Transverse colon (tissue), 4 donors: ENCODE measurements at regions of chr4 and their contacts with region 1.

Region 1: GRCh38 chr4:112284662-112285411 is 867 bp downstream of the TIFA start:
- DNase-seq: peak; percentile 27
- H3K4me3 ChIP-seq: peak overlapping the region; percentile 57 to 97 (median 84)
- H3K27ac ChIP-seq: peak overlapping the region; percentile 84 to 88 (median 86)
- H3K4me1 ChIP-seq: peaks cover 8 to 20% (median 14%) of the 10 kb centered on the region in 4 donors
- H3K27me3 ChIP-seq: no peaks in the 10 kb centered on the region
- CTCF ChIP-seq: no peak
- EP300 ChIP-seq: no peak
- POLR2A ChIP-seq: no peak

Region 2: DNA sequence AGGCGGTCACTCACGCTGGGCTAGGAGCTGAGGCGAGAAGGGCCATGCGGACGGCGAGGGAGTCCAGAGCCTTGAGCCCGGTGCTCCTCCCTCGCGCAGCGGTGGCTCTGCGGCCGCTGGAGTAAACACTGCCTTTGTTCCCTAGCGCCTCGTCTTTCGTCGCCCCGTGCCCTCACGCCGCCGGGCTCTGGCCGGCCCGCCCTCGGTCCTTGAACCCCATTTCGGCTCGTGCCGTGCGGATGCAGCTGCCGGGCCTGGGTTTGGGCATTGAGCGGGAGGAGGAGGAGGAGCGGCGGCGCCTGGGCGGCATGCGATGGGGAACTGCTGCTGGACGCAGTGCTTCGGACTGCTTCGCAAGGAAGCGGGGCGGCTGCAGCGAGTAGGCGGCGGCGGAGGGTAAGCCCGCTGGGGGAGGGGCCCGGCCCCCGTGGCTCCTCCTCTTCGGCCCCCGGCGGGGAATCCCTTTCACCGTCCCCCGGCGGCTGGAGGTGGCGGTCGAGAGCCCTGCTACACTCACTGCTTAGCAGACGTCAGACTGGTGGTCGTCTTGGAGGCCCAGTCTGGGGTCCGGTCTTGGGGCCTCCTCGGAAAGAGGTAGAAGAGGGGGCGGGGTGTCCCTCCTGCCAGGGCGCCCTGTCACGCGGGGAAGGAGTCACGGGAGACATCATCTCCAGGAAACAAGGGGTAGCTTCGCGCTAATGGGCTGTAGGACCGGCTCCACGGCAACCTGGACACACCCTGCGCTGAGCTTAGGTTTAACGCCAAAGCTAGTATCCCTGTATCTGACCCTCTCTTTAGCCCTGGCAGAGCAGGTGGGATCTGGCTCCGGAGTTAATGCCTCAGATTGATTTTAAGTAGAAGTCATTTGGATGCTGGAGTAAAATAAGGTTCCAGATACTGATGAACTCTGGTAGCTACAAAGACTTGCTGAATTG is 52.8 kb before region 1 on chr4 and contains the start of gene AP1AR:
- in situ Hi-C with region 1: loop called in 1 of 4 experiments (anchors 10 kb)
- intact Hi-C with region 1: no loop called
- DNase-seq: peak; percentile 89
- H3K4me3 ChIP-seq: peak within 1 kb of the TSS; percentile 68 to 90 (median 75)
- H3K27ac ChIP-seq: peak within 1 kb of the TSS; percentile 95 to 100 (median 98)
- H3K4me1 ChIP-seq: peaks cover 0 to 35% (median 18%) of the 10 kb centered on the region in 4 donors
- H3K27me3 ChIP-seq: no peaks in the 10 kb centered on the region
- CTCF ChIP-seq: peak in 4 of 5 experiments; percentile 30 to 48 (median 38)
- EP300 ChIP-seq: no peak
- POLR2A ChIP-seq: peak; percentile 97
- total RNA-seq, gene AP1AR: 9.8 to 41.8 (median 38.7) TPM

Region 3: GRCh38 chr4:112245383-112245782 is 39.5 kb before region 1 on chr4:
- in situ Hi-C with region 1: no loop called
- intact Hi-C with region 1: no loop called
- DNase-seq: no peak
- H3K4me3 ChIP-seq: no peak overlapping the region
- H3K27ac ChIP-seq: no peak overlapping the region
- H3K4me1 ChIP-seq: peaks cover 0 to under 1% (median 0%) of the 10 kb centered on the region in 4 donors
- H3K27me3 ChIP-seq: no peaks in the 10 kb centered on the region
- CTCF ChIP-seq: no peak
- EP300 ChIP-seq: no peak
- POLR2A ChIP-seq: no peak

Region 4: GRCh38 chr4:113080050-113080449 is 795.2 kb after region 1 on chr4:
- in situ Hi-C with region 1: no loop called
- intact Hi-C with region 1: no loop called
- DNase-seq: no peak
- H3K4me3 ChIP-seq: no peak overlapping the region
- H3K27ac ChIP-seq: no peak overlapping the region
- H3K4me1 ChIP-seq: no peaks in the 10 kb centered on the region
- H3K27me3 ChIP-seq: no peaks in the 10 kb centered on the region
- CTCF ChIP-seq: no peak
- EP300 ChIP-seq: no peak
- POLR2A ChIP-seq: no peak